Right ventricle myocardium inferior (tissue), 1 donor: ENCODE measurements at regions of chr3 and their contacts with region 1.

Region 1: DNA sequence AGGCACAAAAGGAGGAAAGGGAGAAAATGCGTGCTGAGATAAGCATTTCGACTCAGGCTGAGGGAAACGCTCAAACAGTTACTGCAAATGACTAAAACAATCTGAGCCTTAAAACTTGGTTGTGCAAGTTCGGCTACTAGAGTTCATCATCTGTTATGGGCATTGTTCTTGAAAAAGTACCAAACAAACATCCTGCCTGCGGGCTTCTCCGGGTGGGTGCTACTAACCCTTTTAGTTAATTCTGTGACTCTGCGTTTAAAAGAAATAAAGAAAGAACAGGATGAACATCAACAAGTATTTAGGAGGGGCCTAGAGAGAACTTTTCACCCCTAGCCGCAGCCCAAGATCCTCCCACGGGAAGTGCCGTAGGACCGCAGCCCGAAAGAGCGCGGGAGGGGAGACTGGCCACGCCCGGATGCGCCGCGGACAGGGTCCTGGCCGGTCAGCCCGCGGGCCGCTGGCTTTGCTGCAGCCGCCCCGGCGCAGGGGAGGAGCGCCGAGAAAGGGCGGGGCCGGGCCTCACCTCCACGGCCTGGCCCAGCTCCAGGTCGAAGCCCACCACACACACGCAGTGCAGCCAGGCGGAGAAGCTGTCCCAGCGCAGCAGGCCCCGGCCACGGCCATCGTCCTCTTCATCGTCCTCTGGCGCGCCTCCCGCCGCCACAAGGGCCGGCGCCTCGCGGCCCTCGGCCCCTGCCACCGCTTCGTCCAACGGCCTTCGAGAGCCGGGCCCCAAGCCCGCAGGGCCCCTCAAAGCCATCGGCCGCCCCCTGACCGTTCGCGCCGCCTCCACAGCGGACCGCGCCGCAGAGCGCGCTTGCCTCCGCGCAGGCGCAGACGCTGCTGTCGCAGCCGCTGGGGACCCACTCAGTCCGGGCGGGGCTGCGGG is at the start of gene DENND6A:
- DNase-seq: peak; percentile 92
- ATAC-seq: peak; percentile 97
- total RNA-seq, gene DENND6A: 13.3 TPM

Region 2: GRCh38 chr3:56753206-56753820 is 939.2 kb before region 1 on chr3:
- intact Hi-C with region 1: no loop called
- DNase-seq: no peak
- ATAC-seq: no peak

Region 3: DNA sequence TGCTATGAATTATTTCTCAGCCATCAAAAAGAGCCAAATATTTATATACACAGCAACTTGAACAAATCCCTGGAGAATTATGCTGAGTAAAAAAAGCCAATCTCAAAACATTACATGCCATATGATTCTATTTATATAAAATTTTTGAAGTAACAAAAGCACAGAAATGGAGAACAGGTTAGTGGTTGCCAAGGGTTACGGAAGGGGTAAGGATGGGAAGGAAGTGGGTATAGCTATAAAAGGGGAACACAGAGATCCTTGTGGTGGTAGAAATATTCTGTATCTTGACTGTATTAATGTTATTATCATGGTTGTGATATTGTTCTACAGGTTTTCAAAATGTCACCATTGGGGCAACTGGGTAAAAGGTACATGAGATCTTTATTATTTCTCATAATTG is 337.7 kb before region 1 on chr3:
- intact Hi-C with region 1: no loop called
- DNase-seq: no peak
- ATAC-seq: no peak

Region 4: GRCh38 chr3:57575966-57576626 is 116.4 kb before region 1 on chr3:
- intact Hi-C with region 1: no loop called
- DNase-seq: no peak
- ATAC-seq: no peak

Region 5: GRCh38 chr3:57755668-57756527 is 63.4 kb after region 1 on chr3 and contains the start of gene SLMAP:
- intact Hi-C with region 1: loop called (anchors 1 kb)
- DNase-seq: peak; percentile 99
- ATAC-seq: peak; percentile 99
- total RNA-seq, gene SLMAP: 294 TPM

Region 6: DNA sequence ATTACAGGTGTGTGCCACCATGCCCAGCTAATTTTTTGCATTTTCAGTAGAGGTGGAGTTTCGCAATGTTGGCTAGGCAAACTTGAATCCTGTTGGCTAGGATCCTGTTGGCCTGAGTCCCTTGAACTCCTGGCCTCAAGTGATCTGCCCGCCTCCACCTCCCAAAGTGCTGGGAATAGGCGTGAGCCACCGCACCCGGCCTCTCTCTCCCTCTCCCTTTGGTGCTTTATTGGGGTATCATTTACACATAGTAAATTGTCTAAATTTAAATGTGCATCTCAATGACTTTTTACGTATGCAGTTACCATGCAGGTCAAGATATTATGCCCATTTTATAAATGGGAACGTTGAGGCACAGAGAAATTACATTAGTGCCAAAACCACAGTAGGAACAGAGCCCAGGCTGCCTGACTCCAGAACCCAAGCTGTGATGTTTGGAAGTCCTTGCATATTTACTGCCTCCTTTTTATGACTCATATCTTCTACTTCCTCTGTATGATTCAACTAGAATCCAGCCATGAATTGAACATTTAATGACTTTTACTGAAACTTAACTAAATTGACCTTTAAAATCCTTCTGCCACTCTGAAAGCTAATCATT is 579.5 kb after region 1 on chr3:
- intact Hi-C with region 1: no loop called
- DNase-seq: no peak
- ATAC-seq: no peak